ENCODE measurements at regions of chr3 and their contacts with region 1.

Region 1: GRCh38 chr3:170437696-170438407 is 19.2 kb downstream of the CLDN11 start:
- DNase-seq: no peak
- ATAC-seq: no peak
- H3K4me3 ChIP-seq: no peak overlapping the region
- H3K27ac ChIP-seq: no peak overlapping the region
- H3K4me1 ChIP-seq: peaks cover 7% of the 10 kb centered on the region; the same call in 1 of the 2 replicates
- H3K27me3 ChIP-seq: no peaks in the 10 kb centered on the region
- CTCF ChIP-seq: no peak

Region 2: DNA sequence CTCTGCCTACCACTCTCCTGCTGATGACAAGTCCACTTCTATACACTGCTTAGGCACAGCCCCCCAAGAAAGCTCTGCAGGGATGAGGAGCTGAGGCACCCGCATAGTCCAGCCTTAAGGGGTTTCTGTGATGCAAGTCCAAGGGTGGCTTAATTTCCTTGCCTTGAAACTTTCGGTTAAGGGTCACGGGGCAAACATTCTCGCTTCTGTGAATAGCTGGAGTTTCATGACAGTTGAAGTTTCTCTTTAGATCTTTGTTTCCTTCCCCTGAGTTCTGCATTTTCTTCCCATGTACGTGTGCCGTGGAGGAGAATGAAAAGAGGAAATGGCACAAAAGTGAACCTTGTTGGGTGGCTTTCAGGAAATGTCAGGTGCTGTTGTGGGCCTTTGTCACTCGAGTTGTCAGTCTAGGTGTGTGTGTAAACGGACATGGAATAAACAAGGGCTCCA is 393.0 kb before region 1 on chr3:
- CTCF ChIA-PET with region 1: no interaction called
- POLR2A ChIA-PET with region 1: no interaction called
- intact Hi-C with region 1: no loop called
- DNase-seq: no peak
- ATAC-seq: no peak
- H3K4me3 ChIP-seq: no peak overlapping the region
- H3K27ac ChIP-seq: no peak overlapping the region
- H3K4me1 ChIP-seq: peaks cover 36% of the 10 kb centered on the region
- H3K27me3 ChIP-seq: peaks cover 6% of the 10 kb centered on the region
- CTCF ChIP-seq: no peak

Region 3: DNA sequence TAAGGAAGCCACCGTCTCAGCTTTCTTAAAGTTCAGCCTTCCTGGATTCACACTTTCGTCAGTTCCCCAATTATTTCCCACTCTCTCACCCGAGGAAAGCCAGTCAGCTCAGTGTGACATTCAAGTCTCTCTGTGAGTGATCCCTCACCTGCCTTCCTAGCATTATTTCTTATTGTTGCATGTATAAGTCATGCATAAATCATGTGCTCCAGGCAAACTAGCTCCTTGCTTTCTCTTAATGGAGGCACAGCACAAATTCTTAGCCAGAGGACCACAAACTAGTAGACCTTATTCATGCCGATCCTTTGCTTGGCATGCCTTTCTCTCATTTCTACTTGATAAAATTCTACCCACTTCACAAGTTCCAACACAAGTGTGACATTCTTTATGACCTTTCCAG is 25.2 kb after region 1 on chr3:
- CTCF ChIA-PET with region 1: no interaction called
- POLR2A ChIA-PET with region 1: no interaction called
- intact Hi-C with region 1: loop called (anchors 2 kb)
- DNase-seq: no peak
- ATAC-seq: no peak
- H3K4me3 ChIP-seq: no peak overlapping the region
- H3K27ac ChIP-seq: no peak overlapping the region
- H3K4me1 ChIP-seq: peaks cover 25% of the 10 kb centered on the region
- H3K27me3 ChIP-seq: no peaks in the 10 kb centered on the region
- CTCF ChIP-seq: no peak

Measured in PC-3 (cell line).